ENCODE measurements at regions of chr15 and their contacts with region 1.

Region 1: GRCh38 chr15:70097337-70098169 is at the start of gene TLE3:
- DNase-seq: peak; percentile 99
- H3K4me3 Mint-ChIP-seq: peak within 1 kb of the TSS; percentile 99
- H3K27ac Mint-ChIP-seq: peak within 1 kb of the TSS; percentile 100
- H3K4me1 Mint-ChIP-seq: peaks cover 55% of the 10 kb centered on the region
- H3K27me3 Mint-ChIP-seq: peaks cover 18% of the 10 kb centered on the region
- total RNA-seq, gene TLE3: 59.2 TPM

Region 2: GRCh38 chr15:69468241-69469121 is 629.1 kb before region 1 on chr15:
- CTCF ChIA-PET with region 1: interaction called, 5 read pairs
- POLR2A ChIA-PET with region 1: interaction called, 12 read pairs
- DNase-seq: peak; percentile 88
- H3K4me3 Mint-ChIP-seq: peak overlapping the region; percentile 43
- H3K27ac Mint-ChIP-seq: peak overlapping the region; percentile 87
- H3K4me1 Mint-ChIP-seq: peaks cover 29% of the 10 kb centered on the region
- H3K27me3 Mint-ChIP-seq: peaks cover 33% of the 10 kb centered on the region

Region 3: DNA sequence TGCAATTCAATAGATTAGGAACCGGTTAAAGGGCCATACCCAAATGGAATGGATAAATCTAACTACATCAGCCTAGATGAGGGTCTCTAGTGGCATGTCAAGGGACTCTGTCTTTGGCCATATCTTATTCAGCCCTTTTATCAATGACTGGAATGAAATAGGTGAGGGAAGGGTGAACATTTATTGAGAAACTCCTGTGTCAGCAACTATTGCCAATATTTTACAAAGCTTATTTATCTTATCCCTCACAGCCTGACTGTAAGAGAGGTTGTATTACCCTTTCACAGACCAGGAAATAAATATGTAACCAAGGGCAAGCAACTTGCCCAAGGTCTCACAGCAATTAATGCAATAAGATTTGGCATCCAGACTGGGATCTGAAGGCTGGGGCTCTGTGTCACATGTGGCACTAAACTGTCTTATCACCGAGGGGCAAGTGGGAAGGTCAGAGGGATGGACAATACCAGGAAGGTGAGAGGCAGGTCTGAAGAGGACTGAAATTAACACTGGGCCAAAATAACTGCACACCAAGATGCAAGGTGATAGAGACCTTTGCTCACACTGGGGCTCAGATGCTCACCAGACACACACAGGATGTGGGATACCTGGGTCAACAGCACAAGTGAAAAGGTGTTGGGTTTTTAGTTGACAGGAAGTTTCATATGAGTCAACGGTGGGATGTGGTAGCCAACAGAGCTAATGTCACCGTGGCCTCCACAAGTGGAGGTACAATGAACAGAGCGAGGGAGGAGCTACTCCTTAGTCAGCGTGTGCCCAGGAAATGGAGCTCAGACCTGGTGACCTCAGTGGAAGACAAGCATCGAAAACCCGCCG is 383.6 kb before region 1 on chr15:
- CTCF ChIA-PET with region 1: interaction called, 5 read pairs
- POLR2A ChIA-PET with region 1: interaction called, 10 read pairs
- DNase-seq: peak; percentile 88
- H3K4me3 Mint-ChIP-seq: peak overlapping the region; percentile 0
- H3K27ac Mint-ChIP-seq: peak overlapping the region; percentile 66
- H3K4me1 Mint-ChIP-seq: peaks cover 53% of the 10 kb centered on the region
- H3K27me3 Mint-ChIP-seq: peaks cover 61% of the 10 kb centered on the region

Region 4: GRCh38 chr15:69760890-69761568 is 336.5 kb before region 1 on chr15:
- CTCF ChIA-PET with region 1: interaction called, 5 read pairs
- POLR2A ChIA-PET with region 1: interaction called, 144 read pairs
- DNase-seq: peak; percentile 89
- H3K4me3 Mint-ChIP-seq: peak overlapping the region; percentile 49
- H3K27ac Mint-ChIP-seq: peak overlapping the region; percentile 87
- H3K4me1 Mint-ChIP-seq: peaks cover 69% of the 10 kb centered on the region
- H3K27me3 Mint-ChIP-seq: peaks cover 15% of the 10 kb centered on the region

Region 5: GRCh38 chr15:70083946-70084345 is 13.6 kb before region 1 on chr15:
- CTCF ChIA-PET with region 1: interaction called, 4 read pairs
- POLR2A ChIA-PET with region 1: interaction called, 17 read pairs
- DNase-seq: peak; percentile 34
- H3K4me3 Mint-ChIP-seq: no peak overlapping the region
- H3K27ac Mint-ChIP-seq: no peak overlapping the region
- H3K4me1 Mint-ChIP-seq: peaks cover 63% of the 10 kb centered on the region
- H3K27me3 Mint-ChIP-seq: no peaks in the 10 kb centered on the region

Region 6: DNA sequence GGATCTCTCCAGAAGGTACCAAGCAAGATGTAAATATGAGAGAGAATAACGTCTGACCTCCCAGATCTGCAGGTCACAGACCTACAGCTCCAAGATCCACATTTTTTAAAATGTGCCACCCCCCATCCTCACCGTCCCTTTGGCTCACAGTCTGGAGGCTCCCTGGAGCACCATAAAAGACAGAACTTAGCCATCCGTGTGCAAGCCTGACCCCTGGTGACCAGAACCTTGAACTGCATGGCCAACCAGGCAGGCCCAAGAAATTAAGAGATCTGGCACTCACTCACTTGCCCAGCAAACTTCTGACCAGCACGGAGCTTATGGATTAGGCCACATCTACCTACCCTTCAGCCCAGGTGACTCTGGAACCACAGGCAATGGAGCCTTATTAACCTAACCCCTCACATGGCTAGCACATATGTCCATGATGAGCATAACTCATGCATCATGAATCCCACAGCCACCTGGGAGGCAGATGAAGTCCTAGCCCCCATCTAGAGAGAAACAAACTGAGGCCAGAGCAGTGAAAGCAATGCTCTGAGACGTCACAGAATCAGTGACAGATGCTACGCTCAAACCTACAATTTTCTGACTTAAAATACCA is 390.6 kb after region 1 on chr15:
- CTCF ChIA-PET with region 1: interaction called, 4 read pairs
- POLR2A ChIA-PET with region 1: interaction called, 35 read pairs
- DNase-seq: peak; percentile 75
- H3K4me3 Mint-ChIP-seq: no peak overlapping the region
- H3K27ac Mint-ChIP-seq: no peak overlapping the region
- H3K4me1 Mint-ChIP-seq: peaks cover 58% of the 10 kb centered on the region
- H3K27me3 Mint-ChIP-seq: peaks cover 75% of the 10 kb centered on the region

Measured in activated CD4-positive, alpha-beta memory T cell treated with anti-CD3 and anti-CD28 coated beads, Interleukin-2, amount 10 ng/mL, durations not matched to agents 7 days and 5 days (primary cell).